MCF 10A (cell line): ENCODE measurements at regions of chr7 and their contacts with region 1.

Region 1: DNA sequence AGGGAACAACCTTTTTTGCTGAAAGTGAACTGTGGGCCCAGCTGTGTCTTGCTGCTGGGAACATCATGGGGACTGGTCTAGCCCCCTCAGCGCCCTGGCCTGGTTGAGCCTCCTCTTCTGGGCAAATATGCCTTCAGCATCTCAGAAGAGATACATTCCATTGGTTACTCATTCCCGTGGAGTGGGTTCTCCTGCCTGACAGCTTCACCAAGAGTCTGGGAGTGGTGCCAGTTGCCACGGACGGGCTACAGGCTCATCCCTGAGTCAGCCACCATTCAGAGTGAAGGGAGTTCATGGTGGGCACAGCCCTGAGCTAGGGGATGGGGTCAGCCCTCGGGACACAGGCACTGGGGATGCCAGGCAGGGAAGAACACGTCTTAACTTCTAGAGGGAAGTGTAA is 81.9 kb downstream of the RAMP3 start:
- DNase-seq: peak; percentile 28
- H3K4me3 Mint-ChIP-seq: no peak overlapping the region
- H3K27ac Mint-ChIP-seq: no peak overlapping the region
- H3K4me1 Mint-ChIP-seq: peaks cover 11% of the 10 kb centered on the region
- H3K27me3 Mint-ChIP-seq: peaks cover 45% of the 10 kb centered on the region
- CTCF ChIP-seq: no peak

Region 2: DNA sequence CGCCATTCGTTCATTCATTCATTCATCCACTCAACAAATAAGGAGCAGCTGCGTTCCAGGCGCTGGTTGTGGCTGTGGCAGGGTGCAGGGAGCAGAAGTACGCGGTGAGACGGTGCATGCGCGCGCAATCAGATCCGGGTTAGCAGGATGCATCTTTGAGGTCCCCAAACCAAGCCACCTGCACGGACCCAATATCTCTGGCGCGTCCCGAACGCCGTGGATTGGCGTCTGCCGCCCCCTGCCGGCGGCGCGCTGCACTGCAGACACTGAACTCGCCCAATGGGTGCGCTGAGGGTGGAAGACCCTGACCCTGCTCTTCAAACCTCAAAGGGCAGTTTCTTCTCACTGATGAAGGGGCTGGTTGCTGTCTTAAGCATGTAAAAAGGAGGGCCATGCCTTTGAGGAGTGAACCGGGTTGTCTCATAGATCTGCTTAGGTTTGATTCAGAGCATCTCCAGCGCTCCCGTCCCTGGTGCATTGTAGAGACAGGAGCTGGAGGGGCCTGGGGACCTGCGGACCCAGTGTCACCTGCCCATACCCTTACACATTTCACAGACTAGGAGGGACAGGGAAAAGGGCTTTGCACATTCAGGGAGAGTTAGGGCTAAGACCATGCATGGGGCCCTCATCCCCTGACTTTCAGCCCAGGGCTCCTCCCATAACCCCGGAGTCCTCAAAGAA is 20.6 kb after region 1 on chr7:
- CTCF ChIA-PET with region 1: interaction called, 19 read pairs
- POLR2A ChIA-PET with region 1: no interaction called
- intact Hi-C with region 1: no loop called
- DNase-seq: peak; percentile 44
- H3K4me3 Mint-ChIP-seq: no peak overlapping the region
- H3K27ac Mint-ChIP-seq: no peak overlapping the region
- H3K4me1 Mint-ChIP-seq: no peaks in the 10 kb centered on the region
- H3K27me3 Mint-ChIP-seq: peaks cover 50% of the 10 kb centered on the region
- CTCF ChIP-seq: peak; percentile 99